ENCODE measurements at regions of chr9 and their contacts with region 1.

Region 1: DNA sequence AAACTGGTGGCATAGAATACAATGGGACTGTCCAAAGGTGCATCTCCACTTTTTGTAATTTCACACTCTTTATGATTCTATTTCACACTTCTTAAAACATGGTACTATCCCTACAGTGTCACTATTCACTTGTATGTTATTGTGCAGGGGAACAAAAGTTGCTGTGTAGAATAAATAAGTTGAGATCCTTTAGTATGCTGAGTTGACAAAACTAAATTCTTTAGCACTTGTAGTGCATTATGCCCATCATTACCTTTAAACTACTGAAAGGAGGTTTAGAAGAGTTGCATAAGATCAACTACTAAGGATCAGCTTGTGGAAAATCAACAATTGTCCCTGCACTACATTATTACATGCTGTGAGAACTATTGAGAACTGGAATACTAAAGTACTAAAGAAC is 1380.9 kb downstream of the PTPRD start:
- DNase-seq: no peak
- H3K4me3 ChIP-seq: no peak overlapping the region
- H3K27ac ChIP-seq: no peak overlapping the region
- H3K4me1 ChIP-seq: no peaks in the 10 kb centered on the region
- H3K27me3 ChIP-seq: no peaks in the 10 kb centered on the region
- CTCF ChIP-seq: no peak
- POLR2A ChIP-seq: no peak

Region 2: DNA sequence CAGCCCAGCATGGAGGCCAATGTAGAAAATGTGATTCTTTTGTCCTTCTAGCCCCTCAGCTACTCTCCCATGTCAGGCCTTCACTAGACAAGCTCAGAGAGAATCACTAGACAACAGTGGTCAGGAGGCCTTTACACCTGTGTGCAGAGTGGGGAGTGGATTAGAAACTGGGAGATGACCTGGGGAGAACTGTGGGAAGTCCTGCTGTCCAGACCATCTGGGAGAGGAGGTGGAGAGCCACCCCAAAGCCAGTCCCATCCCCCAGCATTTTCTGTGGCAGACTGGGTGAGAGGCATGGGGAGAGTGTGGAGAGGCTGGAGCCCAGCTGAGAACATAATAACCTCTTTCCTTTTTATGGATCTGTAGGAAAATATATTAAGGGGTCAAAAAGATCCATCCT is 980.4 kb before region 1 on chr9:
- CTCF ChIA-PET with region 1: no interaction called
- POLR2A ChIA-PET with region 1: interaction called, 12 read pairs
- dilution Hi-C with region 1: no loop called
- intact Hi-C with region 1: no loop called
- DNase-seq: no peak
- H3K4me3 ChIP-seq: no peak overlapping the region
- H3K27ac ChIP-seq: no peak overlapping the region
- H3K4me1 ChIP-seq: no peaks in the 10 kb centered on the region
- H3K27me3 ChIP-seq: no peaks in the 10 kb centered on the region
- CTCF ChIP-seq: no peak
- POLR2A ChIP-seq: no peak